ENCODE measurements at regions of chr22 and their contacts with region 1.

Region 1: DNA sequence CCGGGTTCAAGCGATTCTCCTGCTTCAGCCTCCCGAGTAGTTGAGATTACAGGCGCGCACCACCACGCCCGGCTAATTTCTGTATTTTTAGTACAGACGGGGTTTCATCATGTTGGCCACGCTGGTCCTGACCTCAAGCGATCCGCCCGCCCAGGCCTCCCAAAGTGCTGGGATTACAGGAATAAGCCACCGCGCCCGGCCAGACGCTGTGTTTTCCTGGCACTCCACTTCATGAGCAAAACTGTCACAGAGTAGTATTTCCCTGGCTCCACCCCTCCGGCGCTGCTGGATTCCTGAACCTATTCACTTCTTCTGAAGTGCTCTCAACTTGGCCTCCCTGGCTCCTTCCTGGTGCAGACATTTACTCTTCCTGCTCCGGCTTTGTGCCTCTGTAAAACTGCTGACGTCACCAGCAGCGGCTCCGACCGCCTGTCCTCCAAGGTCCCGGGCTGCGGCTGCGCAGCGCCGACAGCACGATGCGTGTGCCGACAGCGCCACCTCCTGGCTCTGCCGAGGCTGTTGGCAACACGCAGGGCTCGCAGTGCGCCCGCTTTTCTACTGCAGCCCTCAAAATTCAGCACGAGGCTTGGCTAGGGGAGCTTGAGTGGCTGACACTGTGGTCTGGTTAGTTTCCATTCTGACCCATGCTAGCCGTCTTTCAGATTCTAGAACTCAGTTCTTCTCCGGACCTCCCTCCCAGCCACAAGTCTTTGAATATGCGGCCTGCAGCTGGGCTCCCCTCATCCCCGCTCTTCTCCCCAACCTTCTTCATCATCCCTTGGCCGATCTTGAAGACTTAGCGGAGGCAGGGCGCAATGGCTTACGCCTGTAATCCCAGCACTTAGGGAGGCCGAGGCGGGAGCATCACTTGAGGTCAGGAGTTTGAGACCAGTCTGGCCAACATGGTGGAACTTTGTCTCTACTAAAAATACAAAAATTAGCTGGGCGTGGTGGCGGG is 36.6 kb downstream of the APOL3 start:
- DNase-seq: peak; percentile 85 to 91
- ATAC-seq: peak; percentile 96 to 98
- H3K4me3 ChIP-seq: peak overlapping the region; percentile 29 to 44 (median 40)
- H3K27ac ChIP-seq: peak overlapping the region; percentile 77 to 84 (median 83)
- H3K4me1 ChIP-seq: peaks cover 0 to 4% of the 10 kb centered on the region in 2 donors
- H3K27me3 ChIP-seq: no peaks in the 10 kb centered on the region
- CTCF ChIP-seq: peak; percentile 96 to 99 (median 98)
- POLR2A ChIP-seq: peak in 1 of 2 donors; percentile 24

Region 2: GRCh38 chr22:35350539-35351503 is 773.1 kb before region 1 on chr22:
- in situ Hi-C with region 1: no loop called
- intact Hi-C with region 1: loop called (anchors 10 kb)
- DNase-seq: peak; percentile 94 to 95
- ATAC-seq: peak; percentile 84 to 86
- H3K4me3 ChIP-seq: peak overlapping the region; percentile 53 to 75 (median 61)
- H3K27ac ChIP-seq: peak overlapping the region; percentile 83 to 91 (median 86)
- H3K4me1 ChIP-seq: peaks cover 16 to 24% of the 10 kb centered on the region in 2 donors
- H3K27me3 ChIP-seq: no peaks in the 10 kb centered on the region
- CTCF ChIP-seq: peak; percentile 93 to 97 (median 95)
- POLR2A ChIP-seq: peak; percentile 68 to 75

Region 3: DNA sequence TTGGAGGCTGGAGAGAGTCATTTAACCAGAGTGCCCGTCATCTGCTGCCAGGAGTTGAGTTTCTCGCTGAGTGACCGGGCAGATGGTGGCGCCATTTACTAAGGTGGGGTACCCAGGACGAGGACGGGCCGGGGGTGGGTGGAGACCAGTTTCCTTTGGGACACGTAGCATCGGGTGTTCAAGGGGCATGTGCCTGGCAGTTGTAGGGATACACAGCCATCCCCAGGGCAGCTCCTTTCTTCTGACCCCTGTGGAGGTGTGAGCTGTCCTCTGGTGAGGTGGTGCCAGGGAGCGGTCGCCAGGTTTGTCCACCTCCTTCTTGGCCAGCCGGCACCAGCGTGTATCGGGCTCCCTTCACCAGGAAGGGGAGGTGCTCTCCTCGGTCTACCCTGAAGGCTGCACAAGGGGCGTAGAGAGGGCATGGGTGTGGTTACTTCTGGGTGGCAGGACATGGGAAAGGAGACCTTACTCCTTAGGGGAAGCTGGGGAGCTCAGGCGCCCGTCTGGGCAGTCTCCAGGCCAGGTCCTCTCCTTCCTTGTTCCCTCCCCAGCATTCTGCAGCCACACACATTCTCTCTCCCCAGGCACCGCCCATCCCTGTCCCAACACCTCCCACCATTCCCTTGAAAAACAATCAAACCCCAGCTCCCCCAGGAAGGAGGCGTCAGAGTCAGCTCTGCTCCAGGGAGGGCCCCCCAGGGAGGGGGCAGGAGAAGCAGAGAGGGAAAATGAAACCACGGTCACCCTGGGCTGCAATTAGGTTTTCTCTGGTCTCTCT is 496.5 kb before region 1 on chr22:
- in situ Hi-C with region 1: loop called in 3 of 4 experiments (anchors 10 kb)
- intact Hi-C with region 1: loop called (anchors 2 kb)
- DNase-seq: peak in 1 of 2 donors; percentile 81
- ATAC-seq: peak; percentile 22 to 35
- H3K4me3 ChIP-seq: peak overlapping the region; percentile 45 to 62 (median 59)
- H3K27ac ChIP-seq: peak overlapping the region; percentile 62 to 76 (median 68)
- H3K4me1 ChIP-seq: peaks cover 12 to 24% of the 10 kb centered on the region in 2 donors
- H3K27me3 ChIP-seq: no peaks in the 10 kb centered on the region
- CTCF ChIP-seq: peak; percentile 23 to 74 (median 46)
- POLR2A ChIP-seq: no peak

Region 4: DNA sequence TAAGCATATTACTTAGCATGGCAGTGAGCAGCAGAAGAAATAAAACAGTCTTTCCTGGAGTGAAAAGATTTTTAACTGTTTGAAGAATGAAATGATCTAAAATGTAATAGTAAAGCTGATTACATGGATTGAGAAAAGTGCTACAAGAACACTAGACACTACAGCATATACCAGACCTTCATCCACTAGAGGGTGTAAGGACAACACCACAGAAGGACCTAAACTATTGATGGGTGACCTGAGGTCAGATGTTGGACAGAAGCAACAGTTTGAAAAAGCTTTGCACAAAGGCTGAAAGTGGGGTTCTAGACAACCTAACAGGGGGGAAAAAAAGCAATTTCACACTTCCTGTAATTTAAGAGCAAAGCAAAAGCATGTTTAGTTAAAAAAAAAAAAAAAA is 193.0 kb before region 1 on chr22:
- in situ Hi-C with region 1: loop called in 3 of 4 experiments (anchors 5 to 10 kb)
- intact Hi-C with region 1: loop called (anchors 1 kb)
- DNase-seq: no peak
- ATAC-seq: peak; percentile 94 to 95
- H3K4me3 ChIP-seq: no peak overlapping the region
- H3K27ac ChIP-seq: no peak overlapping the region
- H3K4me1 ChIP-seq: no peaks in the 10 kb centered on the region
- H3K27me3 ChIP-seq: no peaks in the 10 kb centered on the region
- CTCF ChIP-seq: peak; percentile 45 to 72 (median 66)
- POLR2A ChIP-seq: no peak

Region 5: DNA sequence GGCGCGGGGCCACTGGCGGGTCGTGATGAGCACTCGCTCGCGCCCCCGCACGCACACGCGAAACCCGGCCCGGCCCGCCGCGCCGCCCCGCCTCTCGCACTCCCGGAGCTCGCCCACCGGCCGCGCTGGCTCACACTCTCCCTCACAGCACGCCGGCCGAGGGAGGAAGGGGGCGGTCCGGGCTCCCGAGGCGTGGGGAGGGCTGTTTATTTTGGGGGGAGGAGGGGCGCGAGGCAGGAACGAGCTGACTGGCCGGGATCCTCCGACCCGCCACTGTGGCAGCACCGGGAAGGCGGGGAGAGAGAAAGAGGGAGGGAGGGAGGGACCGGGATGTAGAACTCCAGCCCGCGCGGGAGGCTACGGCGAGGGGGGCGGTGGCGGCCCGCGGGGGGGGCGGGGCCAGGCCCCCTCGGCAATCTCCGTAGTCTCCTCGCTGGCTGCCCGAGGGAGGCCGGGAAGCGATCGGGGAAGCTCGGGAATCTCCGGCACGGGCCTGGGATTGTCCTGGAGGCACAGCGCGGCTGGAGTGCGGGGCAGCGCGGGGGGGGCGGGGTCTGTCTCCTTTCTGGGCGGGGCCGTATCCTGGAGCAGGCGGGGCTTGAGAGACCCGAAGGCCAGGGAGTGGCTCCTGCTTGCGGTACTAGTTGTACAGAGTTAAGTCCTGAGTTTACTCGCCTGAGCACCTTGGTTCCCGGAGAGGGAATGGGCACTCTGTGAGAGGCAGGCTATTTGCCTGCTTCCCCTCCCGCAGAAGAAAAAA is 95.1 kb before region 1 on chr22 and contains the start of gene RBFOX2:
- in situ Hi-C with region 1: no loop called
- intact Hi-C with region 1: no loop called
- DNase-seq: peak; percentile 96 to 97
- ATAC-seq: peak; percentile 90 to 91
- H3K4me3 ChIP-seq: peak within 1 kb of the TSS; percentile 72 to 80 (median 74)
- H3K27ac ChIP-seq: peak within 1 kb of the TSS; percentile 83 to 92 (median 86)
- H3K4me1 ChIP-seq: peaks cover 13 to 15% of the 10 kb centered on the region in 2 donors
- H3K27me3 ChIP-seq: no peaks in the 10 kb centered on the region
- CTCF ChIP-seq: no peak
- POLR2A ChIP-seq: peak; percentile 56 to 67
- total RNA-seq, gene RBFOX2: 26.0 to 32.1 (median 28.6) TPM

Region 6: GRCh38 chr22:36065775-36066559 is 58.0 kb before region 1 on chr22:
- in situ Hi-C with region 1: loop called in 2 of 4 experiments (anchors 5 to 10 kb)
- intact Hi-C with region 1: loop called (anchors 1 kb)
- DNase-seq: peak; percentile 61 to 85
- ATAC-seq: peak; percentile 89 to 93
- H3K4me3 ChIP-seq: peak overlapping the region; percentile 60 to 71 (median 63)
- H3K27ac ChIP-seq: peak overlapping the region; percentile 76 to 82 (median 79)
- H3K4me1 ChIP-seq: peaks cover 0 to 5% of the 10 kb centered on the region in 2 donors
- H3K27me3 ChIP-seq: no peaks in the 10 kb centered on the region
- CTCF ChIP-seq: peak; percentile 99 to 100 (median 100)
- POLR2A ChIP-seq: no peak

Region 7: GRCh38 chr22:36162127-36163034 is 38.4 kb after region 1 on chr22:
- in situ Hi-C with region 1: no loop called
- intact Hi-C with region 1: no loop called
- DNase-seq: no peak
- ATAC-seq: no peak
- H3K4me3 ChIP-seq: no peak overlapping the region
- H3K27ac ChIP-seq: peak overlapping the region in 3 of 4 donors; percentile 5 to 81 (median 28)
- H3K4me1 ChIP-seq: peaks cover 6 to 19% of the 10 kb centered on the region in 2 donors
- H3K27me3 ChIP-seq: no peaks in the 10 kb centered on the region
- CTCF ChIP-seq: no peak
- POLR2A ChIP-seq: no peak

Measured in gastrocnemius medialis (tissue), 4 donors.